Calu3 (cell line): ENCODE measurements at regions of chr6 and their contacts with region 1.

Region 1: DNA sequence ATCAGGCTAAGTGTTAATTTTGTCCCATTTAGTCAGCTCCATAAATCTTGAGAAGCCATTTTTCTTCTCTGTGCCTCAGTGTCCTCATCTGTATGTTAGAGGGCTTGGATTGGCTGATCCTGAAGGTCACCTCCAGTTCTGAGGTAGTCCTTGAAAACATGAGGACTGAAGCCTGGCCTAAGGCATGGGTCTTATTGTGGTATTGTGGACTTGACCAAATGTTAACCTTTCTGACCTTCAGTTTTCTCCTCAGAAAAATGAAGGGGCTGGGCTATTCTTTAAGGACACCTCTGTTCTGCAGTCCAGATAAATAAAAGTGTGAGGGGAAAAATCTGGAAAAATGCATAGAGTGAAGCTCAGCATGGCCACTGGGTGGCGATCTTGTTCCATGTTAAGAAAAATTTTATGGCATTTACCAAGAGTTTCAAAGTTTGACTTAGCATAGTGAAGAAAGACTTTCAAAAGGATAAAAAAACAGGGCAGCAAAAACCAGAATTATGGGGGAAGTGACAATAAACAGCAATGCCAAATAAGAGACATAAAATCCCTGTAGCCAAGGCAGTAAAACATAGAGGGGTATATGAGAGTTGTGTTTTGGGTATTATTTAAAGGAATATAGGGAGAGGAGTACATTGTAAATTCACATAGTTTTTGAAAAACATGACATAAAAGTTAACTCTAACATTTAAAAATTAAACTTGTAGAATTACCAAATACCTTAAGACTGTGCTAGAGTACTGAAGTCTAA is 13.2 kb upstream of the TFB1M start:
- DNase-seq: peak; percentile 67
- H3K4me3 Mint-ChIP-seq: peak overlapping the region; percentile 55
- H3K27ac Mint-ChIP-seq: peak overlapping the region; percentile 96
- H3K4me1 Mint-ChIP-seq: peaks cover 42% of the 10 kb centered on the region
- H3K27me3 Mint-ChIP-seq: no peaks in the 10 kb centered on the region
- CTCF ChIP-seq: peak; percentile 52

Region 2: GRCh38 chr6:155493694-155494143 is 166.2 kb after region 1 on chr6:
- CTCF ChIA-PET with region 1: no interaction called
- intact Hi-C with region 1: loop called (anchors 10 kb)
- DNase-seq: peak; percentile 55
- H3K4me3 Mint-ChIP-seq: no peak overlapping the region
- H3K27ac Mint-ChIP-seq: peak overlapping the region; percentile 82
- H3K4me1 Mint-ChIP-seq: peaks cover 30% of the 10 kb centered on the region
- H3K27me3 Mint-ChIP-seq: no peaks in the 10 kb centered on the region
- CTCF ChIP-seq: no peak

Region 3: DNA sequence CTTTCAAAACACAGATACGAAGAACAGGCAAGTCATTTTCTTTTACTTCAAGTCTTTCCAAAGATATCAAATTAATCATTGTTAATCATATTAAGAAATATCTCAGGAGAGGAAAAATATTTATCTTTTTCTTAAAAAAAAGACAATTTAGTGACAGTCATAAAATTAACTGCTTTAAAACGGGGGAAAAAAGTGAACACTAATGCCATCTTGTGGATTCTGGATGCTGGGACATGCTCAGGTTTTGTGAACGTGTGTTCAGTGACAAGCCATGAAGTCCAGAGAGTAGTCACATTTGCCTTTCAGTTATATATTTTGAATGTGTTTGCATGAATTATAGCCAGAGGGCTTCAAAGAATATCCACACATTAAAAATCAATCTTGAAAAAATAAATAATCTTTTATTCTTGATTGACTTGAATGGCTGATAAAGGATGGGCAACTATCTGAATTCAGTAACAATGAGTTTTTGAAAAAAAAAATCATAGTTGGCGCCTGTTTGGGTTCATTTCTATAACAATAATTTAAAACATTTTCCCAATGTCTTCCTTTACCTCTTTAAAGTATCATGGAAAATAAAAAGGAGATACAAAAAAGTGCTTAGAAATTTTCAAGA is 202.8 kb after region 1 on chr6:
- CTCF ChIA-PET with region 1: interaction called, 12 read pairs
- intact Hi-C with region 1: loop called (anchors 1 kb)
- DNase-seq: peak; percentile 12
- H3K4me3 Mint-ChIP-seq: no peak overlapping the region
- H3K27ac Mint-ChIP-seq: no peak overlapping the region
- H3K4me1 Mint-ChIP-seq: peaks cover 8% of the 10 kb centered on the region
- H3K27me3 Mint-ChIP-seq: no peaks in the 10 kb centered on the region
- CTCF ChIP-seq: peak; percentile 41

Region 4: DNA sequence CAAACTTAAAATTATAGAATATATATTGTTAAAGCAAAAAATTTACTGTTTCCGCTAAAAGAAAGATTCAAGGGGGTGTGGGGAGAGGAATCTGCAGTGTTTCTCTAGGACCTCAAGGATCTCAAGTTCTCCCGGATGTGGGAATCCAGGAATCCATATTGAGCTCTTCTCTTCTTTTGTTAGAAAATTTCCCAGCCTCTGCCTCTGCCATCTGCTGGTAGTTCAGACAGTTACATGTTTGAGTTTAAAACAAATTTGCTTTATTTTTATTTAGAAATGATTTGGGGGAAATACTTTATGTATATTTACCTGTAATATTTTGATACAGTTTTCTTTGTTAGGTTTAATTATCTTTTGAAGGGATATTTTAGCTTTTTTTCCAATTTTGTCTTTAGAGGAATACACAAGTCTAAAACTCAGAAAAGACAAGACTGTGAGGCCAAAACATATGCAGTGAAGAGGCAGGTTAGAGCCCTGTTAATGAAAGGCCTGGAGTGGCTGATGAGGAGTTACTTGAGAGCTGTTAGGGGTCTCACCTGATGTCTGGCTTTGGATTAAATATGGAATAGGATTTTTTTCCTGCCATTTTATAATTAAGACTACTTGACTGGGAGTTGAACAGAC is 1718.4 kb after region 1 on chr6:
- CTCF ChIA-PET with region 1: no interaction called
- intact Hi-C with region 1: loop called (anchors 10 kb)
- DNase-seq: peak; percentile 8
- H3K4me3 Mint-ChIP-seq: no peak overlapping the region
- H3K27ac Mint-ChIP-seq: no peak overlapping the region
- H3K4me1 Mint-ChIP-seq: no peaks in the 10 kb centered on the region
- H3K27me3 Mint-ChIP-seq: no peaks in the 10 kb centered on the region
- CTCF ChIP-seq: peak; percentile 30

Region 5: GRCh38 chr6:157128235-157128775 is 1800.8 kb after region 1 on chr6:
- CTCF ChIA-PET with region 1: interaction called, 12 read pairs
- intact Hi-C with region 1: no loop called
- DNase-seq: no peak
- H3K4me3 Mint-ChIP-seq: no peak overlapping the region
- H3K27ac Mint-ChIP-seq: no peak overlapping the region
- H3K4me1 Mint-ChIP-seq: peaks cover 9% of the 10 kb centered on the region
- H3K27me3 Mint-ChIP-seq: no peaks in the 10 kb centered on the region
- CTCF ChIP-seq: no peak